ENCODE measurements at regions of chr16 and their contacts with region 1.

Region 1: GRCh38 chr16:87765776-87766484 is at the start of gene KLHDC4:
- DNase-seq: peak; percentile 92
- H3K4me3 Mint-ChIP-seq: peak within 1 kb of the TSS; percentile 97
- H3K27ac Mint-ChIP-seq: peak within 1 kb of the TSS; percentile 97
- H3K4me1 Mint-ChIP-seq: peaks cover 48% of the 10 kb centered on the region
- H3K27me3 Mint-ChIP-seq: no peaks in the 10 kb centered on the region
- total RNA-seq, gene KLHDC4: 82.1 to 84.9 TPM

Region 2: DNA sequence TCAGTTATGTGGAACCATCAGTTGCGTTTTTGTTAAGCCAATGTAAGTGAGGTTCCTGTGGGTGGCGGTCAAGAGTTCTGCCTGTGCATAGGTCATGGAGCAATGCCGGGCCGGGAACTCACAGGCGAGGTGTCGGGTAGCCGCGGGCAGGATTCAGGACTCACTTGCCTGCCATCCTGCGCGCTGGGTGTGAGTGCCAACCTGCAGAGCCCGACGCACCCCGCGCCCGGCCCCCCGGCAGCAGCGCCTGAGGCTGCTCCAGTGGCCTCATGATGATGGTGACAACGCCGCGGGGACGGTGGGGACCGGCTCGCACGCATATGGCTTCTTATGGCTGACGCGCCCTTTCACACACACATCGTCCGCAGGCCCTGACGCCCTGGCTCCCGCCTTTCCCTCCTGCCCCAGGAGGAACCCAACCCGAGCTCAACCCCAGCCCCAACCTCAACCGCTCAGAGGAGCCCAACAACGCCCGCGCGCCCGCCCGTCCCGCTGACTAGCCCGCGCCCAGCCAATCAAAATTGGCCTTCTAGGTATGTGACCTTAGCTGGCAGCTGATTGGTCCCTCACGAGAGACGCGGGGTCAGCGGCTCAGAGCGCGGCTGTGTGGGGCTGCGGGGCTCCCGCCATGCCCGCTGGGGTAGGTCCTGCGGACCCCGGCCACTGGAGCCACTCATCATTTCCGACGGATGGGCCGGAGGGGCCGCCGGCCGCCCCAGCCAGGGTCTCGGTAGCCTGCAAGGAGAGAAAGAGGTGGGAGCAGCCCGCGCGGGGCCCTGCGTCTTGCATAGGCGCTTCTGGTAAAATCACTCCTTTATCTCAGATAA is 448.8 kb before region 1 on chr16 and contains the start of gene C16orf95:
- CTCF ChIA-PET with region 1: no interaction called
- POLR2A ChIA-PET with region 1: interaction called, 11 read pairs
- DNase-seq: peak; percentile 96
- H3K4me3 Mint-ChIP-seq: peak within 1 kb of the TSS; percentile 99
- H3K27ac Mint-ChIP-seq: peak within 1 kb of the TSS; percentile 97
- H3K4me1 Mint-ChIP-seq: peaks cover 27% of the 10 kb centered on the region
- H3K27me3 Mint-ChIP-seq: no peaks in the 10 kb centered on the region
- total RNA-seq, gene C16orf95: 8.6 to 9.6 TPM

Region 3: GRCh38 chr16:87636072-87636684 is 129.8 kb before region 1 on chr16:
- CTCF ChIA-PET with region 1: interaction called, 10 read pairs
- POLR2A ChIA-PET with region 1: interaction called, 7 read pairs
- DNase-seq: peak; percentile 79
- H3K4me3 Mint-ChIP-seq: peak overlapping the region; percentile 43
- H3K27ac Mint-ChIP-seq: no peak overlapping the region
- H3K4me1 Mint-ChIP-seq: peaks cover 12% of the 10 kb centered on the region
- H3K27me3 Mint-ChIP-seq: peaks cover 15% of the 10 kb centered on the region

Region 4: DNA sequence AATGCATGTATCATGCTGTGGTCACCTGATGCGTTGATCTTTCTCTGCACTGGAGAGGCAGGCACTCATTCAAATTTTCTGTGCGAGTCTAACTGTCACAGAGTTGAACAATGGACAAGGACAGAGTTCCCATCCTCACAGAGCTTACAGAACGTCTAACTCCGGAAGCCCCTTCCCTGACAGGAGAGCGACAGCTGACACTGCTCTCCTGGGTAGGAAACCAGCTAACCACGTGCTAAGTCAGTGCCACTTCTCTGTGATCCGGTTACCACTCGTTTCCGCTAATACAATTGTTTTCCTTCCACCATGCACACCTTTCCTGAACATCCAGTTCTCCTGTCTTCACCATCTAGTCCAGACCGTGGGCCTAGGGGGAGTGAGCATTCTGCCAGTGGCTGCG is 11.4 kb before region 1 on chr16:
- CTCF ChIA-PET with region 1: interaction called, 4 read pairs
- POLR2A ChIA-PET with region 1: interaction called, 11 read pairs
- DNase-seq: no peak
- H3K4me3 Mint-ChIP-seq: no peak overlapping the region
- H3K27ac Mint-ChIP-seq: peak overlapping the region; percentile 34
- H3K4me1 Mint-ChIP-seq: peaks cover 11% of the 10 kb centered on the region
- H3K27me3 Mint-ChIP-seq: no peaks in the 10 kb centered on the region

Region 5: GRCh38 chr16:87860553-87861299 is 94.8 kb after region 1 on chr16:
- CTCF ChIA-PET with region 1: no interaction called
- POLR2A ChIA-PET with region 1: interaction called, 40 read pairs
- DNase-seq: no peak
- H3K4me3 Mint-ChIP-seq: peak overlapping the region; percentile 56
- H3K27ac Mint-ChIP-seq: peak overlapping the region; percentile 83
- H3K4me1 Mint-ChIP-seq: peaks cover 87% of the 10 kb centered on the region
- H3K27me3 Mint-ChIP-seq: no peaks in the 10 kb centered on the region

Region 6: DNA sequence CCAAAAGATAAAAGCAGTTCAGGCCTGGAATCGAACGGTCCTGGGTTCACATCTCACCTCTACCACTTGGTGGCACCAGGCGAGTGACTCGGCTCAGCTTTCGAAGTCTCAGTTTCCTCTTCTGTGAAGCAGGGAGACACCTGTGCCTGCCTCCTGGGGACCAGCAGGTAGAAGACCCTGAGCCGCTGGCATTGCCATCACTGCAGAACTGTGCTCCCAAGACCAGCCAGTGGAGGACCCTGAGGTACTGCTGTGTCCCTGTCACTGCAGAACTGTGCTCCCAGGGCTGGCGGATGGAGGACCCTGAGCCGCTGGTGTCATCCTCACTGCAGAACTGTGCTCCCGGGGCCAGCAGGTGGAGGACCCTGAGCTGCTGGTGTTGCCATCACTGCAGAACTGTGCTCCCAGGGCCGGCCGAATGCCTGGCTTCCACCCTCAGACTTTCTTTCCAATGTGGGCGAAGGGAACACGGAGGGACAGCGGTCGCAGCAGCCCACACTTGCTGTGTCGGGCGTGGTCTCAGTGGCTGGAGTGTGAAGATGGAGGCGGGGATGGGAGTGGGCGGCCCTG is 112.1 kb after region 1 on chr16:
- CTCF ChIA-PET with region 1: interaction called, 72 read pairs
- POLR2A ChIA-PET with region 1: interaction called, 12 read pairs
- DNase-seq: peak; percentile 57
- H3K4me3 Mint-ChIP-seq: no peak overlapping the region
- H3K27ac Mint-ChIP-seq: no peak overlapping the region
- H3K4me1 Mint-ChIP-seq: peaks cover 30% of the 10 kb centered on the region
- H3K27me3 Mint-ChIP-seq: peaks cover 22% of the 10 kb centered on the region

Region 7: GRCh38 chr16:87895641-87896141 is 129.8 kb after region 1 on chr16:
- CTCF ChIA-PET with region 1: interaction called, 5 read pairs
- POLR2A ChIA-PET with region 1: interaction called, 27 read pairs
- DNase-seq: peak; percentile 93
- H3K4me3 Mint-ChIP-seq: peak overlapping the region; percentile 54
- H3K27ac Mint-ChIP-seq: peak overlapping the region; percentile 100
- H3K4me1 Mint-ChIP-seq: peaks cover 56% of the 10 kb centered on the region
- H3K27me3 Mint-ChIP-seq: no peaks in the 10 kb centered on the region